ENCODE measurements at regions of chr11 and their contacts with region 1.

Region 1: GRCh38 chr11:74929431-74930363 is 19.2 kb downstream of the XRRA1 start:
- DNase-seq: peak in 1 of 3 donors; percentile 91
- ATAC-seq: peak; percentile 85
- H3K4me3 ChIP-seq: no peak overlapping the region
- H3K4me1 ChIP-seq: no peaks in the 10 kb centered on the region
- CTCF ChIP-seq: peak; percentile 74

Region 2: DNA sequence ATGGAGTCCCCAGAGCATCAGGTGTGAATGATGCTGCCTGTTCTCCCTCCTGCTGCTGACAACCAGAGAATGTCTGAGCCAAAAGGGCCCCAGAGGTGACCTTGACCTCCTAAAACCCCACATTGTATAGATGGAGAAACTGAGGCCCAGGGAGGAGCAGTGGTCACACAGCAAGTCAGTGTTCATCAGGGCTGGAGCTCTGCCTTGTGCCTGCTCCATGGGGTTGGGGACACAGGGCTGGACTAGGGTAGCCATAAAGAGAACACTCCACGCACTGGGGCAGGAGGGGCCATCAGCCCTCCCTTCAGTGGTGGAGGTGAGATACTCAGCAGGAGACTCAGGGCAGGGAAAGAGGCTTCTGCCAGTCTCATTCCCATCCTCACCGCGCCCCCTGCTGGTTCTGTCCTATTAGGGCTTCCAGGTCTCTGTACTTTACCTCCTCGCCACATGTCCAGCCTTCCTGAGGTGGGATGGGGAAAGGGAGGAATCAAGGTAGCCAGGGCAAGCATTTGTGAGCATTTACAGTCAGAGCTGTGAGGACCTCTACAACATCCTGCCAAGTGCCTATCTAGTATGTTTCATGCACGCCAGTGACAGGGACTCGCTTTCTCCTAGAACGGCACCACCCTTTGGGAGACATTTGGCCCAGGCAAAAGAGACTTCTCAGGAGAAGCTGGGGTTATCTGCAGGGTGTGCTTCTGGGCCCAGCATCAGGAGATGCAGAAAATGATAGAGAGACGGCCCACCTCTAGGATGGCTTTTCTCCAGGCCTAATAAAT is 102.3 kb after region 1 on chr11:
- intact Hi-C with region 1: loop called (anchors 5 kb)
- DNase-seq: peak; percentile 63 to 88 (median 84)
- ATAC-seq: peak; percentile 84
- H3K4me3 ChIP-seq: no peak overlapping the region
- H3K4me1 ChIP-seq: no peaks in the 10 kb centered on the region
- CTCF ChIP-seq: peak; percentile 65

Region 3: GRCh38 chr11:75241036-75241905 is 311.6 kb after region 1 on chr11:
- intact Hi-C with region 1: loop called (anchors 10 kb)
- DNase-seq: peak; percentile 85 to 95 (median 88)
- ATAC-seq: peak; percentile 98
- H3K4me3 ChIP-seq: no peak overlapping the region
- H3K4me1 ChIP-seq: peaks cover 14% of the 10 kb centered on the region
- CTCF ChIP-seq: peak; percentile 100

Measured in mucosa of descending colon (tissue), 3 donors.